Activated B cell treated with CpG ODN at 0.5 μM for 24 hours (primary cell): ENCODE measurements at regions of chr4 and their contacts with region 1.

Region 1: DNA sequence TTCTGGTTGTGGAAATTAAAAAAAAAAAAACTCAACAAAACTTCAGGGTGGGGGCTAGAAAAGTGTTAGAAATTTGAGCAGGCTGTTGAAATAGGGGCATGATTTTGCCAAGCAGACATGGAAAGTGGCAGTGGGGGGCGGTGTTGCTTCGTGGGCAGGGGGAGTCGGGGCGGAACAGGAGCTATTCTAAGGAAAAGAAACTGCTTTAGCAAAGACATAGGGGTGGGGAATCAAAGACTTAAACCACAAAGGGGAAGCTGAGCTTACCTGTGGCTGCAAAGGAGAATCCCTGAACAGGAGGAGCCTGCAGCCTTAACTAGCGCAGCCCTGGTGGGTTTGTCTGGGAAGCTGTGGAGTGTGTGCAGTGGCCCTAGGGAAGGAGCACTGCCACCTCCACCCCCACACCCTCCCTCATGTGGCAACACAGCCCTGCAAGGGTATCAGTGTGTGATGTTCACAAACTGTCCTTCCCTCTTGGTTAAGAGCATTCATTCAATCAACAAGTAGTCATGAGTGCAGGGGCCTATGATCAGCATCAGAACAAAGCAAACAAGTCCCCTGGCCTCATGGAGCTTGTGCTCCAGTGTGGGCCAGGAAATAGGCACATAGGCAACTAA is 20.5 kb downstream of the SEL1L3 start:
- DNase-seq: peak; percentile 51
- ATAC-seq: peak; percentile 87
- H3K4me3 Mint-ChIP-seq: peak overlapping the region; percentile 61
- H3K27ac Mint-ChIP-seq: peak overlapping the region; percentile 86
- H3K4me1 Mint-ChIP-seq: peaks cover 77% of the 10 kb centered on the region
- H3K27me3 Mint-ChIP-seq: no peaks in the 10 kb centered on the region
- CTCF ChIP-seq: no peak

Region 2: GRCh38 chr4:25875281-25875745 is 33.0 kb after region 1 on chr4:
- CTCF ChIA-PET with region 1: interaction called, 3 read pairs
- POLR2A ChIA-PET with region 1: interaction called, 4 read pairs
- intact Hi-C with region 1: loop called (anchors 2 kb)
- DNase-seq: no peak
- ATAC-seq: peak; percentile 38
- H3K4me3 Mint-ChIP-seq: peak overlapping the region; percentile 29
- H3K27ac Mint-ChIP-seq: peak overlapping the region; percentile 84
- H3K4me1 Mint-ChIP-seq: peaks cover 94% of the 10 kb centered on the region
- H3K27me3 Mint-ChIP-seq: no peaks in the 10 kb centered on the region
- CTCF ChIP-seq: no peak

Region 3: GRCh38 chr4:25986807-25987206 is 144.5 kb after region 1 on chr4:
- CTCF ChIA-PET with region 1: interaction called, 13 read pairs
- POLR2A ChIA-PET with region 1: interaction called, 3 read pairs
- intact Hi-C with region 1: loop called (anchors 1 kb)
- DNase-seq: no peak
- ATAC-seq: no peak
- H3K4me3 Mint-ChIP-seq: no peak overlapping the region
- H3K27ac Mint-ChIP-seq: no peak overlapping the region
- H3K4me1 Mint-ChIP-seq: peaks cover 16% of the 10 kb centered on the region
- H3K27me3 Mint-ChIP-seq: peaks cover 3% of the 10 kb centered on the region
- CTCF ChIP-seq: no peak

Region 4: DNA sequence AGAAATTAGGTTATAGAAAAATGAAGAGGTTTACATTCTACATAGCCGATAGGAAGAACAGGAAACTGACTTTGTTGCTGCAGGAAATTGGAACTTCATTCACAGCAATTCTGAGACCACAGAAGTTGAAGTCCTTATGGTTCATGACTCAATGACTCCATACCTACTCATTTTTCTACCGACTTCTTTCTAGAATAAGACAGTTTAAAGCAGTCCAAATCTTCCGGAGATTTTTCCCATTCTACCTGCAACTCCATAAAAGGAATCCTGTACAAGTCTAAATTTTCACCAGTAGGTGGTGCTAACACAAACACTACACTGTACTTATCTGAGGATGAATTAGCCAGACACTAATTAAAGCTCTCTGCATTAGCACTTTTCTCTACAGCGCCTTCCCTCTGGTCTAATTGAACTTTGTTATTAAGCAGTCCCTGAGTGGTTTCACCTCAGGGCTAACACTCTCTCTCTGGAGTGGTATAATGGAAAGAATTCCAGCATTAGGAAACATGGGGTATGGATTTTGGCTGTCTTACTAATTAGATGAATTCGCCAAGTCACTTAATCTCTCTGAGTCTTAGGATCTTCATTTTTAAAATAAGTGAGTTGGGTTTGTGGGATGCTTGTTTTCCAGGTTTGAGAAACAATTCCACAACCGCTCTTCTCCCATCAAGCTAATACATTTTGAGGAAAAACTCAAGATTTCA is 239.6 kb after region 1 on chr4:
- CTCF ChIA-PET with region 1: interaction called, 5 read pairs
- POLR2A ChIA-PET with region 1: no interaction called
- intact Hi-C with region 1: loop called (anchors 1 kb)
- DNase-seq: no peak
- ATAC-seq: peak; percentile 52
- H3K4me3 Mint-ChIP-seq: no peak overlapping the region
- H3K27ac Mint-ChIP-seq: no peak overlapping the region
- H3K4me1 Mint-ChIP-seq: peaks cover 14% of the 10 kb centered on the region
- H3K27me3 Mint-ChIP-seq: peaks cover 3% of the 10 kb centered on the region
- CTCF ChIP-seq: no peak

Region 5: GRCh38 chr4:26330186-26330787 is 487.9 kb after region 1 on chr4:
- CTCF ChIA-PET with region 1: interaction called, 15 read pairs
- POLR2A ChIA-PET with region 1: interaction called, 3 read pairs
- intact Hi-C with region 1: loop called (anchors 1 kb)
- DNase-seq: no peak
- ATAC-seq: peak; percentile 81
- H3K4me3 Mint-ChIP-seq: no peak overlapping the region
- H3K27ac Mint-ChIP-seq: no peak overlapping the region
- H3K4me1 Mint-ChIP-seq: peaks cover 14% of the 10 kb centered on the region
- H3K27me3 Mint-ChIP-seq: no peaks in the 10 kb centered on the region
- CTCF ChIP-seq: peak; percentile 62